ENCODE measurements at regions of chr19 and their contacts with region 1.

Region 1: DNA sequence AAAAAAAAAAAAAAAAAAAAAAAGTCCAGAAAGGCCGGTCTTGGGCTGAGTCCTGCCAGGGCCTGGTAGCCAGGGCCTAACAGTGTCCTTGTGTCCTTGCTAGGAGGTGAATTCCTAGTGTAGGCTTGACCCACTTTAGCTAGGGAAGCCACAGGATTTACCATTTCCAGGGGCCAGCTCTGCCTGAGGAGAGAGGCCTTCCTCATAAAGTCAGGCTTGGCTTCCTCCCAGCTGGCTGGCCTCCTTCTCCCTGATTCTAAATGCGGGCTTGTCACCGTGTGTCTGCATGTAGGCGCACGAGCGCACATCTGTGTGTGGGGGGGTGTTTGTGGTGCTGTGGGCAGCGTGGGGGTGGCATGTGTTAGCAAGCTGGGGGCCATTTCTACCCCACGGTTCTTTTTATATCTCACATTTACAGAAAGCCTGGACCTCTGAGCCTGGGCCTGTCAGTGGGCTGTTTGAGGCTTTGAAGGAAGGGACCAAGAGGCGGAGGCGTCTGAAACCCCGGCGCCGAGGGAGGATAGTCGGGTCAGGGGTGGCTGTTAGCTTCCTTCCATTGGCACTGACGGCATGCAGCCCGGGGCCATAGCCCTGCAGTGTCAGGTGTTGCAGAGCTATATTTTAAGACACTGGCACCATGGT is 31.7 kb downstream of the IER2 start:
- DNase-seq: no peak
- ATAC-seq: peak; percentile 44
- H3K4me3 Mint-ChIP-seq: no peak overlapping the region
- H3K27ac Mint-ChIP-seq: peak overlapping the region; percentile 82
- H3K4me1 Mint-ChIP-seq: peaks cover 19% of the 10 kb centered on the region
- H3K27me3 Mint-ChIP-seq: no peaks in the 10 kb centered on the region

Region 2: DNA sequence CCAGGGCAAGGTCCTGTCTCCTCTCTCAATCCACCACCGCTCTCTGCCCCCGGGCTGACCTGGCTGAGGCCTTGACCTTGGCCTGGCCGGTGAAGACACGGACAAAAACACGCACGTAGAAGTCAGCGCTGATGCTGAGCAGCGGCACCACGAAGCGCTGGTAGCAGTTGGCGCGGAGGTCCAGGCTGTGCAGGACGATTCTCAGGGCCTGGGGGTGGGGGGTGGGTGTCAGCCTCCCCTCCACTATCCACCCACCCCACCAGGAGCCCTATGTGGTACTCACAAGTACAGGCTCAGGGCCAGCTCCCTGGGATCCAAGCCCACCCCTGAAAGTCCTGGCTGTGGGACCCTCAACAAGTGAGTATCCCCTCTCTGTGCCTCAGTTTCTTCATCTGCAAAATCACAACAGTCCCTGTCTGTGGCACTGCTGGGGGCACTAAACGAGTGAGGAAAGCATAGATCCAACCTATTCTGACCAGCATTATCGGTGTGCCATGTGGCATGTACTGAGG is 71.7 kb before region 1 on chr19:
- POLR2A ChIA-PET with region 1: no interaction called
- DNase-seq: no peak
- ATAC-seq: no peak
- H3K4me3 Mint-ChIP-seq: no peak overlapping the region
- H3K27ac Mint-ChIP-seq: no peak overlapping the region
- H3K4me1 Mint-ChIP-seq: peaks cover 1% of the 10 kb centered on the region
- H3K27me3 Mint-ChIP-seq: no peaks in the 10 kb centered on the region

Region 3: GRCh38 chr19:13143135-13143534 is 38.7 kb before region 1 on chr19:
- POLR2A ChIA-PET with region 1: no interaction called
- DNase-seq: no peak
- ATAC-seq: no peak
- H3K4me3 Mint-ChIP-seq: no peak overlapping the region
- H3K27ac Mint-ChIP-seq: no peak overlapping the region
- H3K4me1 Mint-ChIP-seq: peaks cover 2% of the 10 kb centered on the region
- H3K27me3 Mint-ChIP-seq: no peaks in the 10 kb centered on the region

Region 4: DNA sequence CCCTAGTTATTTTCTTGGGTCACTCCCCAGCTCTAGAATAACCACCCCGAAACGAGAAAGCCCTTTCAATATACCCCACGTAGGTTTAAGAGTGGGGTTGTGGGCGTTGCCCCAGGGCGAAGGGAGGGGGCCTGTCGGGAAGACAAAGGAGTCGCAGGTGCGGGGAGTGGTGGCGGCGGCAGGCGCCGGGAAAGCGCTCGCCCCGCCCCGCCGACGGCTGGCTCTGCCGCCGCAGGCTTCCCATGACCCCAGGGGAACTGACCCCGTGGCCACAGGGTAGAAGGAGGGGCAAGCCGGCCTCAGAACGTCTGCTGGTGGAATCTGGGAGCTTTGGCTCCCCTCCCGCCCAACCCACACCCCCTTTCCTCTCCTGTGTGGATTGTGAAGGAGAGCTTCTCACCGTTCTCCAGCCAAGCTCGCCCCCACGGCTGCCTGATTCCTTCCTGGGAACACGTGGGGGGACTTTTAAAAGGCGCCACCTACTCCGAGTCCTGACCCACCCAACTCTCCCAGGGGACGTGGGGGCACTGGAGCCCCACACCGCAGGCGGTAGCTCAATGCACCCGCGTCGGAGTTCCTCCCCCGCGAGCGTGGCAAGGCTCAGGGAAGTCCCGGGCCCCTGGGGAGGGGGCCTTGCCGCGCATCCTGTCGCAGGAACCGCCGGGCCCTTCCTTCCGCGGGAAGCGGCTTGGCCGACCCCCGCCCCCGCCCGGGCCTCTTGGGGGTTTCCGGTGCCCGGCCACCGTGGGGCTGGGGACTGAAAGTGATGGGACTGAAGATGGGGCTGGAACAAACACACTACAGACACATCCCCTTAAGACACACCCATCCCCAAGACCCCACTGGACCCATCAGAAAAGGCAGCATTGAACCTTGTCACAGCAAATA is 26.2 kb before region 1 on chr19:
- POLR2A ChIA-PET with region 1: interaction called, 31 read pairs
- DNase-seq: peak; percentile 87
- ATAC-seq: peak; percentile 16
- H3K4me3 Mint-ChIP-seq: peak overlapping the region; percentile 98
- H3K27ac Mint-ChIP-seq: peak overlapping the region; percentile 100
- H3K4me1 Mint-ChIP-seq: peaks cover 37% of the 10 kb centered on the region
- H3K27me3 Mint-ChIP-seq: no peaks in the 10 kb centered on the region

Region 5: DNA sequence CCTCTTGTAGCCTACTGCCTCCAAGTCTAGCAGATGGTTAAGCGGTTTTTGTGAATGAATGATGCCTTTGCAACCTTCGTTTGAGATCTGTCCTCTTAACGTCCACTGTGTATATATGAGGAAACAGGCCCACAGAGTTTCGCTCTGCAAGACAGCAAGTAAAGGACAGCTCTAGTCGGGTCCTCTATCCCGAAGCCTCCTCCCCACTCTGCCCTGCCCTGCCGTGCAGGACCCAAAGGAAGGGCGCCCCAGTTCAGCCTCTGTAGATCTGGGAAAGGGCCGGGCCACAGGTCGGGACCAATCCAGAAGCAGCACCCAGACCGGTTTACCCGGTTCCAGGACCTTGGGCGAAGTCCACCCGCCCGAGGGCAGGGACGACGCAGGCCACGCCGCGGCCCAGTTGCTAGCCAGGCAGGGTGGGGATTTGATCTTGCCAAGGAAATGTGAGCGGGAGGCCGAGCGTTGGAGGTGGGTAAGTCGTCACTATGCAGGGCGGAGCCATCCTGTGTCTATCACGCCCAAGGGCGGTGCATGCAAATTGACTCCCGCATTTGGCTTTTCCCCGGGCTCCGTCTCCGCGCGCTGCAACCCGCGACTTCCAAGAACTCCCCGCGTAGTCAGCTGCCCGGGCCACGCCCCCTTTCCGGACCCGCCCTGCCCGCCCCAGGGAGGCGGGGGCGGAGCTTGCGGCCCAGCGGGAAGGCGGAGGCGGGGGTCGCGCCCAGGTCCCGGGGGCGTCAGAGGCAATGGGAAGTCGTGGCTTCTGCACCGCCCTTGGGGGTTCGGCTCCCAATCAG is 19.2 kb before region 1 on chr19:
- POLR2A ChIA-PET with region 1: interaction called, 44 read pairs
- DNase-seq: peak; percentile 91
- ATAC-seq: peak; percentile 59
- H3K4me3 Mint-ChIP-seq: peak overlapping the region; percentile 92
- H3K27ac Mint-ChIP-seq: peak overlapping the region; percentile 96
- H3K4me1 Mint-ChIP-seq: peaks cover 52% of the 10 kb centered on the region
- H3K27me3 Mint-ChIP-seq: no peaks in the 10 kb centered on the region

Measured in activated naive CD8-positive, alpha-beta T cell treated with anti-CD3 and anti-CD28 coated beads, Interleukin-2, amount 10 ng/mL, durations not matched to agents 7 days and 5 days (primary cell).